ENCODE measurements at regions of chr4 and their contacts with region 1.

Region 1: DNA sequence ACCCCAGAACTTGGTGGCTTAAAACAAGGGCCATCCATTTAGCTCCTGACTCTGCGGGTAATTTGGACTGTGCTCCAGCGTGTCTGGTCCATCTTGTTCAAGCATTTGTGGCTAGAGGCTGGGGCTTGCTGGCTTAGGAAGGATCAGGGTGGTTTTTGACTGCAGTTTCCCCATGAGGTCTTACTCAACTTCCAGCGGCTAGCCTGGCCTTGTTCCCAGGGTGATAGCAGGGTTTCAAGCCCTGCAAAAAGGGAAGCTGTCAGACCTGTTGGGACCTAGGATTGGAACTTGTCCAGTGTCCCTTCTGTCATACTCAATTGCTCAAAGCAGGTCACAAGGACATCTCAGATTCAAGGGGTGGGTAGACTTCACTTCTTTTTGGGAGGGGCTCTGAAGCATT is 206.0 kb downstream of the STIM2 start:
- DNase-seq: no peak
- H3K4me3 ChIP-seq: no peak overlapping the region
- H3K27ac ChIP-seq: no peak overlapping the region
- H3K4me1 ChIP-seq: no peaks in the 10 kb centered on the region
- H3K27me3 ChIP-seq: no peaks in the 10 kb centered on the region
- CTCF ChIP-seq: no peak

Region 2: DNA sequence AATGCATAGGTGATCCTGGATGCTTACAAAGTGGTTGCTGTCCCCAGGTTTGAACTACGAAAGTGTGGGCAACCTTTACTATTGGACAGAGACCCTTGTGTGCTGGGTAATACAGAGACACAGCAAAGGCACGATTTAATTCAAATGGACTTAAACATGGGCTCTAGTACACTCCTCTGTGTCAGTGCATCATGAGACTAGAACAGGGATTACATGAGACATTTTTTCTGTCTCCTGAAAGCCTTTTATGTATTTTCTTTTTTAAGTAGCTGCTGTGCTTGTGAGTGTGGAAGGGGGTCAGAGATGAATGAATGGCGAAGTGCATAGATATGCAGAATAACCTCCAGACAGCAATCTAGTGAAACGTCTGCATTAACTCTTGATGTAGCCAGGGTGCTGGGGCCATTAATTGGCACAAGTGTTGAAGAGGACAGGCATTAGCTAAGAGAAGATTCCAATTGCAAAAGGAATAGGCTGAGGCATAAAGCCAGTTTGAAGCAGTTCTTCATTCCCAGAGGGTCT is 12.4 kb after region 1 on chr4:
- CTCF ChIA-PET with region 1: no interaction called
- POLR2A ChIA-PET with region 1: no interaction called
- intact Hi-C with region 1: loop called (anchors 1 kb)
- DNase-seq: no peak
- H3K4me3 ChIP-seq: no peak overlapping the region
- H3K27ac ChIP-seq: no peak overlapping the region
- H3K4me1 ChIP-seq: no peaks in the 10 kb centered on the region
- H3K27me3 ChIP-seq: peaks cover 7% of the 10 kb centered on the region
- CTCF ChIP-seq: no peak